WTC11 (cell line): ENCODE measurements at regions of chr11 and their contacts with region 1.

Region 1: DNA sequence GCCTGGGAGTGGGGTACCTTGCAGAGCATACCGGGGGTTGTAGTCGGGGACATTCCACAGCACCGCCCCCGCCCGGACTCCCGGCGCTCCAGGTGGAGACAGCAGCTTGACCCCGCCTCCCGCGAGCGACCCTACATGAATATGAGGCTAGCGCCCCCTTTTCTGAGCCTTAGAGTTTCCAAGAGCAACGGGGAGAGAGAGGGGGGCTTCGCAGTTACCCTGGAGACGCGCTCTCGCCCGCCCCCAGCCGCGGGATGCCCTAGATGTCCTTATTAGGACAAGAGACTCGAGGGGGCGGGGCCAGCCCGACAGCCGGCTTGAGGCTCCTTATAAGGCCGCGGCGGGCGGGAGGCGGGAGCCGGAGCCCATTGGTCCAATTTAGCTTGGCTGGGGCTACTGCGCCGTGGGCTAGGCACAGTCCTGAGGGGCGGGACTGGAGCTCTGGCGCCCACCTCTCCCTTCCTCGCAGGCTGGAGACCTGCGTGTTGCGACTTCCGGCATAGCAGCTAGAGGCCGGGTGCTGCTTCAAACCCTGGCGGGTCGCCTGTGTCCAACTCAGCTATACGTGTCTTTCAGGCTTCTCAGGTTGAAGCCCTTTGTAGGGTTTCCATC is 927 bp upstream of the MUS81 start:
- DNase-seq: peak; percentile 100
- ATAC-seq: peak; percentile 67
- H3K4me3 Mint-ChIP-seq: peak overlapping the region; percentile 90
- H3K27ac Mint-ChIP-seq: peak overlapping the region; percentile 100
- H3K4me1 Mint-ChIP-seq: peaks cover 23% of the 10 kb centered on the region
- H3K27me3 Mint-ChIP-seq: no peaks in the 10 kb centered on the region
- CTCF ChIP-seq: no peak

Region 2: DNA sequence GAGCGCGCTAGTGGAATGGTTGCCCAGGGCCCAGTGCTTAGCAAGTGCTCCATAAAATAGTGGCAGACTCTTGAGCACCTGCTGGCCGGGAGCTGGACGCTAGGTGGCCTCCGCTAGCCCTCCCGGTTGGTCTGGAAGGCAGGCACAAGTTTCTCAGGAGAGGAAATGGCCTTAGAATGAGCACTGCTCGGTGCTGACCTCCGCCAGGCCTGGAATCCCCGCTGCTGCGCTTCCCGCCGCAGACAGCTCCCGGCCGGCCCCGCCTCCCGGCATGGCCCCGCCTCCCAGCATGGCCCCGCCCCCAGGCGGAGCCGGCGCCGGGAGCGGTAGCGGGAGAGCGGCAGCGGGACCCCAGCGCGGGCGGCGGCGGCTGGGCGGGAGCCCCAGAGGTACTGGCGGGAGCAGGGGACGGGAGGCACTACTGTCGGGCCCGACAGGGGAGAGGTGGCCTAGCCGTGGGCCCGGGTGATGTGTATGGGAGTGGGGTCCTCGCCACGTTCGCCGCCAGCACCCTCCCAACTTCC is 221.4 kb before region 1 on chr11 and contains the start of gene SIPA1:
- CTCF ChIA-PET with region 1: interaction called, 10 read pairs
- POLR2A ChIA-PET with region 1: interaction called, 8 read pairs
- DNase-seq: peak; percentile 89
- ATAC-seq: peak; percentile 70
- H3K4me3 Mint-ChIP-seq: peak within 1 kb of the TSS; percentile 81
- H3K27ac Mint-ChIP-seq: peak within 1 kb of the TSS; percentile 94
- H3K4me1 Mint-ChIP-seq: peaks cover 22% of the 10 kb centered on the region
- H3K27me3 Mint-ChIP-seq: no peaks in the 10 kb centered on the region
- CTCF ChIP-seq: no peak
- total RNA-seq, gene SIPA1: 63.3 to 71.7 TPM (median 65.4 TPM) in 3 replicates

Region 3: GRCh38 chr11:65743928-65744698 is 115.2 kb before region 1 on chr11:
- CTCF ChIA-PET with region 1: interaction called, 12 read pairs
- POLR2A ChIA-PET with region 1: interaction called, 3 read pairs
- DNase-seq: peak; percentile 71
- ATAC-seq: peak; percentile 99
- H3K4me3 Mint-ChIP-seq: no peak overlapping the region
- H3K27ac Mint-ChIP-seq: no peak overlapping the region
- H3K4me1 Mint-ChIP-seq: no peaks in the 10 kb centered on the region
- H3K27me3 Mint-ChIP-seq: peaks cover 38% of the 10 kb centered on the region
- CTCF ChIP-seq: no peak

Region 4: GRCh38 chr11:65873318-65874156 is 14.2 kb after region 1 on chr11:
- CTCF ChIA-PET with region 1: interaction called, 89 read pairs
- POLR2A ChIA-PET with region 1: interaction called, 26 read pairs
- DNase-seq: peak; percentile 97
- ATAC-seq: peak; percentile 84
- H3K4me3 Mint-ChIP-seq: peak overlapping the region; percentile 88
- H3K27ac Mint-ChIP-seq: no peak overlapping the region; the same call in 1 of the 2 replicates
- H3K4me1 Mint-ChIP-seq: peaks cover 2% of the 10 kb centered on the region; the same call in 1 of the 2 replicates
- H3K27me3 Mint-ChIP-seq: peaks cover 55% of the 10 kb centered on the region
- CTCF ChIP-seq: no peak

Region 5: DNA sequence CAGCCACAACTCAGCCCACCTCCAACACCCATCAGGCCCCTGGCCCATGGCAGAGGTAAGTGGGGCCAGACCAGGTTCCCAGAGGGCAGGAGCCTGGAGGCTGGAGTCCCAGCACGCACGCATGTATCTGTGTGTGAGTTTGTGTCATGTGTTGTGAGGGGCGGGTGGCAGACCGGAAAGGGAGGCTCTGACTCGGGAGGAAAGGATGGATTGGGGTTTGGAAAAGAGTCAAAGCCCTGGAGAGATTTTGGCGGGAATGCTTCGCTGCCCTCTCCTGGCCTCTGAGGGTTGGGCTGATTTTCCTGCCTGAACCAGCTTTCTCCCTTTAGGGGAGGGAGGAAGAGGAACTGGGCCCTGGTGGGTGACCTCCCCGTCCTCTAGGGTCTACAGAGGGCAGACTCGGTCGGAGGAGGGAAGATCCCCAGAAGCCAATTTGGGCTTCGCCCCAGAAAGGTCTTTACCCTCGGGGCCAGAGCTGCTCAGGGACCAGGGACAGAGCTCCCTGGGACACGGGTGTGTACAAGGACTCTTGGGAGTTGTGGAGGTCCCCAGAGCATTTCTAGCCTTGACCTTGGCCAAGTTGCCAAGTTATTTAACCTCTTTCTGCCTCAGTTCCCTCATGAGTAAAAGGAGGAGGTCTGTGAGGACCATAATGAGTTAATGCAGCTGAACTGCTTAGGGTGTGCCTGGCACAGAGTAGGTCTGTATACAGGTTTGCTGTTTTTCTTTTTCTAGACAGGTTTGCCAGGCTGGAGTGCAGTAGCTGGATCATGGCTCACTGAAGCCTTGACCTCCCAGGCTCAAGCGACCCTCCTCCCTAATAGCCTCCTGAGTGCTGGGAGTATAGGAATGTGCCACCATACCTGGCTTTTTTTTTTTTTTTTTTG is 52.6 kb after region 1 on chr11:
- CTCF ChIA-PET with region 1: interaction called, 13 read pairs
- POLR2A ChIA-PET with region 1: interaction called, 3 read pairs
- DNase-seq: peak; percentile 69
- ATAC-seq: peak; percentile 81
- H3K4me3 Mint-ChIP-seq: no peak overlapping the region
- H3K27ac Mint-ChIP-seq: no peak overlapping the region
- H3K4me1 Mint-ChIP-seq: peaks cover 17% of the 10 kb centered on the region
- H3K27me3 Mint-ChIP-seq: peaks cover 27% of the 10 kb centered on the region
- CTCF ChIP-seq: no peak